B cell (primary cell): ENCODE measurements at regions of chr7 and their contacts with region 1.

Region 1: GRCh38 chr7:28179120-28180030 is 1.2 kb downstream of the JAZF1 start:
- DNase-seq: peak; percentile 87
- ATAC-seq: peak; percentile 69
- H3K4me3 ChIP-seq: peak overlapping the region; percentile 35 to 70 (median 53)
- H3K4me3 Mint-ChIP-seq: peak overlapping the region; percentile 83
- H3K27ac ChIP-seq: peak overlapping the region; percentile 5 to 76
- H3K27ac Mint-ChIP-seq: peak overlapping the region; percentile 75
- H3K4me1 ChIP-seq: peaks cover 49 to 70% of the 10 kb centered on the region in 2 donors
- H3K4me1 Mint-ChIP-seq: peaks cover 71% of the 10 kb centered on the region
- H3K27me3 ChIP-seq: no peaks in the 10 kb centered on the region
- H3K27me3 Mint-ChIP-seq: no peaks in the 10 kb centered on the region
- CTCF ChIP-seq: no peak

Region 2: DNA sequence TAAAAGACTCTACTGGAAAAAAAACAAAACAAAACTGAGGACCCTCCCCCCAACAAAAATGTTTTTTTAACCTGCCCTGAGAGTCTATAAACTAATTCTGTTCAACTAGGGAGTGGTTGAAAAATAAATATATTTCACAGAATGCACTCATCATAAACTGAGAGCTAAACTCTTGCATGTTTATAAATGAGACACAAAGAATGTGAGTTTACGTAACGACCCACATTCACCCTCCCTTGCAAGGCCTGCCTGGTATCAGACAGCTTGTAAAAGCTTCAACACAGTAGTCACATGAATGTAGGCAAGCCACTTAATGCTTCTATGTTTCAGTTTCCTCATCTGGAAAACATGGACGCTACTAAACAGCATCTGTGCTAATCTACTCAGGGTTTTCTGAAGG is 49.1 kb before region 1 on chr7:
- CTCF ChIA-PET with region 1: no interaction called
- POLR2A ChIA-PET with region 1: no interaction called
- intact Hi-C with region 1: loop called (anchors 10 kb)
- DNase-seq: no peak
- ATAC-seq: no peak
- H3K4me3 ChIP-seq: no peak overlapping the region
- H3K4me3 Mint-ChIP-seq: no peak overlapping the region
- H3K27ac ChIP-seq: no peak overlapping the region
- H3K27ac Mint-ChIP-seq: no peak overlapping the region
- H3K4me1 ChIP-seq: peaks cover 43 to 62% of the 10 kb centered on the region in 2 donors
- H3K4me1 Mint-ChIP-seq: peaks cover 70% of the 10 kb centered on the region
- H3K27me3 ChIP-seq: no peaks in the 10 kb centered on the region
- H3K27me3 Mint-ChIP-seq: no peaks in the 10 kb centered on the region
- CTCF ChIP-seq: no peak

Region 3: GRCh38 chr7:28155019-28155660 is 24.2 kb before region 1 on chr7:
- CTCF ChIA-PET with region 1: no interaction called
- POLR2A ChIA-PET with region 1: interaction called, 5 read pairs
- intact Hi-C with region 1: loop called (anchors 1 kb)
- DNase-seq: peak; percentile 79
- ATAC-seq: peak; percentile 78
- H3K4me3 ChIP-seq: peak overlapping the region in 4 of 5 experiments; percentile 23 to 58 (median 36)
- H3K4me3 Mint-ChIP-seq: peak overlapping the region; percentile 59
- H3K27ac ChIP-seq: peak overlapping the region; percentile 71 to 74
- H3K27ac Mint-ChIP-seq: peak overlapping the region; percentile 84
- H3K4me1 ChIP-seq: peaks cover 89 to 98% of the 10 kb centered on the region in 2 donors
- H3K4me1 Mint-ChIP-seq: peaks cover 88% of the 10 kb centered on the region
- H3K27me3 ChIP-seq: no peaks in the 10 kb centered on the region
- H3K27me3 Mint-ChIP-seq: no peaks in the 10 kb centered on the region
- CTCF ChIP-seq: no peak

Region 4: GRCh38 chr7:28165961-28166955 is 13.1 kb before region 1 on chr7:
- CTCF ChIA-PET with region 1: interaction called, 4 read pairs
- POLR2A ChIA-PET with region 1: interaction called, 7 read pairs
- intact Hi-C with region 1: loop called (anchors 1 kb)
- DNase-seq: no peak
- ATAC-seq: no peak
- H3K4me3 ChIP-seq: peak overlapping the region in 1 of 5 experiments; percentile 38
- H3K4me3 Mint-ChIP-seq: no peak overlapping the region
- H3K27ac ChIP-seq: peak overlapping the region; percentile 56 to 59
- H3K27ac Mint-ChIP-seq: no peak overlapping the region
- H3K4me1 ChIP-seq: peaks cover 95% of the 10 kb centered on the region in 2 donors
- H3K4me1 Mint-ChIP-seq: peaks cover 93% of the 10 kb centered on the region
- H3K27me3 ChIP-seq: no peaks in the 10 kb centered on the region
- H3K27me3 Mint-ChIP-seq: no peaks in the 10 kb centered on the region
- CTCF ChIP-seq: no peak

Region 5: DNA sequence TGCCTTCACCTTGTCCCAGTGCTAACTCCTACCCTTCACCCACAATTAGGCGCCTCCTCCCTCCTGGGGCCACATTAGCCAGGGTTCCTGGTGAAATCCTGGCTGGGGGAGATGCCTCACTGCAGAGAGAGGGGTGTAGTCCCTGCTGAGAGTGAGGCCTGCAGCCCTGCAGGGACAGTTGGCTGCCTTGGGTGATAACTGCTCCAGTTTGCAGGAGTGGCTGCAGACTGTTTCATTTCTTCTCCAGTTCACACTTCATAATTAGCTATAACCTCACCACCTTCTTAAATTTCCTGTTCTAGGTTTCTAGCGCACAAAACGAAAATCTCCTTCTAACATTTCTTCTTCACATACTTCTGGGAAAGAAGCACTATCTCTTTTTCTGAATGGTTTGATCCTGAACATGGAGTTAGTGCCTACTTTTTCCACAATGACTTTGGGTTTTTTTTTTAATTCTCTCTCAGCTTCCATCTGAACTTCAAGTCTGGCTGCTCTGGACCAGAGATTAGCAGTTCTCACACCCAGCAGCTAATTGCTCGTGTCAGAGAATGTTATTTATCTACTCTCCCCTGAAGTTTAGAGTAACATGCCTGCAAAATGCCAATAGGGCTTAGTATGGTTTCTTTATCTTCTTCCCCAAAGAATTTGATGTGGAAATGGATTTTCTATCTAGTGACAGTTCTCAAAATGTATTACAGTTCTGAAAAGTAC is 16.7 kb after region 1 on chr7:
- CTCF ChIA-PET with region 1: interaction called, 5 read pairs
- POLR2A ChIA-PET with region 1: no interaction called
- intact Hi-C with region 1: loop called (anchors 2 kb)
- DNase-seq: no peak
- ATAC-seq: no peak
- H3K4me3 ChIP-seq: no peak overlapping the region
- H3K4me3 Mint-ChIP-seq: peak overlapping the region; percentile 8
- H3K27ac ChIP-seq: peak overlapping the region in 1 of 2 donors; percentile 1
- H3K27ac Mint-ChIP-seq: peak overlapping the region; percentile 21
- H3K4me1 ChIP-seq: peaks cover 39 to 41% of the 10 kb centered on the region in 2 donors
- H3K4me1 Mint-ChIP-seq: peaks cover 39% of the 10 kb centered on the region
- H3K27me3 ChIP-seq: no peaks in the 10 kb centered on the region
- H3K27me3 Mint-ChIP-seq: no peaks in the 10 kb centered on the region
- CTCF ChIP-seq: no peak

Region 6: GRCh38 chr7:28272461-28272877 is 93.1 kb after region 1 on chr7:
- CTCF ChIA-PET with region 1: interaction called, 3 read pairs
- POLR2A ChIA-PET with region 1: no interaction called
- intact Hi-C with region 1: loop called (anchors 5 kb)
- DNase-seq: peak; percentile 76
- ATAC-seq: peak; percentile 68
- H3K4me3 ChIP-seq: peak overlapping the region in 3 of 5 experiments; percentile 13 to 51 (median 27)
- H3K4me3 Mint-ChIP-seq: peak overlapping the region; percentile 60
- H3K27ac ChIP-seq: no peak overlapping the region
- H3K27ac Mint-ChIP-seq: no peak overlapping the region
- H3K4me1 ChIP-seq: peaks cover 14 to 22% of the 10 kb centered on the region in 2 donors
- H3K4me1 Mint-ChIP-seq: peaks cover 25% of the 10 kb centered on the region
- H3K27me3 ChIP-seq: no peaks in the 10 kb centered on the region
- H3K27me3 Mint-ChIP-seq: no peaks in the 10 kb centered on the region
- CTCF ChIP-seq: peak; percentile 80